ENCODE measurements at regions of chr2 and their contacts with region 1.

Region 1: DNA sequence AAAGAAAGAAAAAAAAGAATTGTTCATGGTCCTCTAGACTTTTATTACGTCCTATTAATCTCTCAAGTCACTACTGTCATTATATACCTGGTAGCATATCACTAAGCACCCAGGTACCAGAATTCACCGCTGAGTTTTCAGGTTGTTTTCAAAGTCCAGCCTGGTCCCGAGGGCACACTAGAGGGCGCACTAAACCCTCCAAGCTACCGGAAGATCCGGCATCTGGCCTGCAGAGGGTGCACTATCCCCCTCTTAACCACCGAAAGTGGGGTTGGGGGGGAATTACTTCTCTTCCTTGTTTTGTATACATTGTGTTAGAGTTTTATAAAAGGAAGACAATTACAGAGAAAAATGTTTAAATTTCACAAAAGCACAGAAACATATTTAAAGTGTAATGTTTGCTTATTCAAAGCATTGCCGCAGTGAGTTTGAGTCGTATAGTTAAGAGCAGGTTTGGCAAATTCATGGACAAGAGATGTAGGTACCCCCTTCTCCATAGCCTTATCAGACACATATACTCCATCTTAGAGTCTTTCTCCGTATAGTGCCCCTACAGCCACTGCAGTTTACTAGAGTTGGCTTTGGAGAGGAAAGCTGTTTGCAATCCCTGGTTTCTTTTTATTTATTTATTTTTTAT is 19.2 kb downstream of the MOGAT1 start:
- DNase-seq: no peak
- H3K4me3 ChIP-seq: no peak overlapping the region
- CTCF ChIP-seq: peak; percentile 99

Region 2: DNA sequence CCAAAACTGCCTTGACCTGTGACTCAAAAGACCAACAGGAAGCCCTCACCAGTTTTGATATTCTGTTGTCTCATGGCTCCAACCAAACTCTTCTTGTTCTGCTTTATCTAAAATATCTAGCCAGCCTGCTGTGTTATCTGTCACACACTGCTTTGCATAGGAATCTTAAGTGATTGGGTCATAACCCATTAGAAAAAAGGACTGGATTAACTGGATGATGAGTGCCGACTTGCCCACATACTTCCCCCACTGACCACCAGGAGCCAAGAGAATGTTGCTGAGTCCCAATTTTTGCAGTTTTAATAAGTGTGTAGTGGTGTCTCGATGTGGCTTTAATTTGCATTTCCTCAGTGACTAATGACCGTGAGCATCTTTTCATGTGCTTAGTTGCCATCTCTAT is 12.7 kb before region 1 on chr2:
- CTCF ChIA-PET with region 1: interaction called, 76 read pairs
- POLR2A ChIA-PET with region 1: no interaction called
- DNase-seq: no peak
- H3K4me3 ChIP-seq: no peak overlapping the region
- CTCF ChIP-seq: no peak

Region 3: GRCh38 chr2:222707689-222708525 is 17.2 kb after region 1 on chr2:
- CTCF ChIA-PET with region 1: interaction called, 156 read pairs
- POLR2A ChIA-PET with region 1: no interaction called
- DNase-seq: peak; percentile 77
- H3K4me3 ChIP-seq: no peak overlapping the region
- CTCF ChIP-seq: peak; percentile 83

Region 4: GRCh38 chr2:222903234-222904220 is 212.8 kb after region 1 on chr2:
- CTCF ChIA-PET with region 1: interaction called, 100 read pairs
- POLR2A ChIA-PET with region 1: no interaction called
- DNase-seq: no peak
- H3K4me3 ChIP-seq: no peak overlapping the region
- CTCF ChIP-seq: peak; percentile 50

Region 5: GRCh38 chr2:222939208-222939856 is 248.7 kb after region 1 on chr2:
- CTCF ChIA-PET with region 1: interaction called, 15 read pairs
- POLR2A ChIA-PET with region 1: no interaction called
- DNase-seq: no peak
- H3K4me3 ChIP-seq: no peak overlapping the region
- CTCF ChIP-seq: peak; percentile 72